GM10248 (cell line): ENCODE measurements at regions of chr2 and their contacts with region 1.

Region 1: GRCh38 chr2:85888684-85889626 is at the start of gene ST3GAL5:
- DNase-seq: peak; percentile 94
- CTCF ChIP-seq: peak; percentile 78

Region 2: DNA sequence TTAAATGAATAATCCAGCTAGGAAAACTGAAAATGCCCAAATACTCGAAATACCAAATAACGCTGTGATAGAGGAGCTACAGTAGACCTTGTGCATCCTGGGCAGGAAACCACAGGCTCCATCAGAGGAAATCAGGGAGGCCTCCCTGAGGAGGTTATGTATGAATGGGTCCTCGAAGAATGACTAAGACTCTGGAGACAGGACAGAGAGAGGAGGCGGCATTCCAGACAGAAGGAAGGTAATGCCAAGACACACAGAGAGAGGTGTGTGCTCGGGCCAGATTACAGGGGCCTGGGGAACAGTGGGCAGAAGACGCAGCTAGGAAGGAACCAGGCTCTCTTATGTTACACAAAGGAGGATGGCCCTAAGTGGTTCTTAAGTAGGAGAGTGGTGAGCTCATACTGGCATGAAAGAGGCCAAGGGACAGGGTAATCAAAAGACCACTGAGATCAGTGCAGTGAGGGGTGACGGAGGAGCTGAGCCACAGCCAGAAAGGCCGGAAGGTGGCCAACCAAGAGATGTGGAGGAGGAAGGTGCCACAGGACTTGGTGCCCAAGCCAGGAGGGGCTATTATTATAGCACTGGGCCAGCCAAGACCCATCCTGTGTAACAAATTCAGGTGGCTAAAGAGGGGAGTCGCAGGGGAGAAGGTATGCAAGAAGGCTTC is 10.1 kb before region 1 on chr2:
- CTCF ChIA-PET with region 1: interaction called, 28 read pairs
- POLR2A ChIA-PET with region 1: no interaction called
- DNase-seq: no peak
- CTCF ChIP-seq: no peak

Region 3: DNA sequence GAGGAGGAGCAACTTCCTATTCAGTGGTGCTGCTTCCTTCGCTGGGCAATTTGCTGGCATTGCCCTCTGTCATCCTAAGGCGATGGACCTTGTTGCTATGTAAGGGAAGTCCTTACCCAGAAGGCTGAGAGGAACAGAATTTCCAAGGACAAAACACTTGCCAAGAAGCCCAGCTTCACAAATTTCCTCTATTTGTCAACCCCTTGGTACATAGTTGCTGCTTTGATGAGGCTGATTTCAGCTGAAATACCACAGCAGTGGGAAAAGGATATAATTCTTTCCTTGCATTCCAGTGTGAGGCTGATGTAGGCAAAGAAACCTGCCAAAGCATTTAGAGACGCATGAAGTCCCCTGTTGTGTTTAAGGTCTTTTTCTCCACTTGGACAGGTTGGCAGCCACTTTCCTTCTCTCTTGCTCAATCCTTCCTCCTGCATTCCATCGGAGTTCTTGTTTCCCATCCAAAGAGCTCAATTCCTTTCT is 16.3 kb after region 1 on chr2:
- CTCF ChIA-PET with region 1: interaction called, 44 read pairs
- POLR2A ChIA-PET with region 1: no interaction called
- DNase-seq: no peak
- CTCF ChIP-seq: no peak

Region 4: GRCh38 chr2:85911814-85912692 is 23.1 kb after region 1 on chr2:
- CTCF ChIA-PET with region 1: interaction called, 19 read pairs
- POLR2A ChIA-PET with region 1: no interaction called
- DNase-seq: no peak
- CTCF ChIP-seq: no peak

Region 5: GRCh38 chr2:85920810-85921545 is 32.0 kb after region 1 on chr2:
- CTCF ChIA-PET with region 1: interaction called, 15 read pairs
- POLR2A ChIA-PET with region 1: no interaction called
- DNase-seq: no peak
- CTCF ChIP-seq: no peak

Region 6: GRCh38 chr2:86035883-86036668 is 147.1 kb after region 1 on chr2:
- CTCF ChIA-PET with region 1: interaction called, 32 read pairs
- POLR2A ChIA-PET with region 1: no interaction called
- DNase-seq: peak; percentile 87
- CTCF ChIP-seq: peak; percentile 51

Region 7: DNA sequence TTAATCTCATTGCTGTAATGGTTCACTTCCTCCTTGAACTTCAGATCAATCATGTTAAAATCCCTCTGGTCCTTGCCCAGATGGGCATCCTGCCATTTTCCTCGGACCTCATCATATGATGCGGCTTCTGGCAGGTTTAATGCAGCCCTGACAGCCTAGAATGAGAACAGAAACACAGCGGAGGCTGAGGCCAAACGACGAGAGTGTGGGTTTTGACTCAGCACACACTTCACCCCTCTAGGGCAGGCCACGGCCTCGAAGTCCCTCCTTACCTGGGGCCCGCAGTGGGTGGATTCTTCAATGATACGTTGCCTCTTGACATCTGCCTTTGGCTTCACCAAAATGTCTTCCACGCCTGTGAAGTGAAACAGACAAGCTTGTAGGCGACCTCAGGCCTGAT is 159.9 kb after region 1 on chr2:
- CTCF ChIA-PET with region 1: no interaction called
- POLR2A ChIA-PET with region 1: no interaction called
- DNase-seq: no peak
- CTCF ChIP-seq: no peak

Region 8: DNA sequence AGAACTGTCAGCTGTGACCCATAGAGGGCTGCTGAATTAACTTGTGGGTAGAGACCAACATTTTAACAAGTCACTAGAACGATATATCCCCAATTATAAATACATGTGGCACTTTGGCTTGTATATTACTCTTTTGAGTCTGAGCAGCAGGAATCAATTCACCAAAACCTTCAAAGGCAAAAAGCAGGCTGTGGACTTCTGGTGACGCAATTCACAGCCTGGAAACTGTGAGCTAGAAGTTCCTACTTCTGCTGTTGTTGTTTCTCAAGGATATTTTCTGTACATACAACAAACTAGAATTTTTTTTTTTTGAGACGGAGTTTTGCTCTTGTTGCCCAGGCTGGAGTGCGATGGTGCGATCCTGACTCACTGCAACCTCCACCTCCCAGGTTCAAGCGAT is 254.4 kb after region 1 on chr2:
- CTCF ChIA-PET with region 1: no interaction called
- POLR2A ChIA-PET with region 1: no interaction called
- DNase-seq: no peak
- CTCF ChIP-seq: no peak